Activated CD4-positive, alpha-beta T cell treated with anti-CD3 and anti-CD28 coated beads, Interleukin-2, amount 10 ng/mL, durations not matched to agents 24 days and 14 days (primary cell): ENCODE measurements at regions of chr4 and their contacts with region 1.

Region 1: GRCh38 chr4:100093091-100093866 is 97.0 kb downstream of the DDIT4L start:
- DNase-seq: peak; percentile 94
- H3K4me3 Mint-ChIP-seq: peak overlapping the region; percentile 43
- H3K27ac Mint-ChIP-seq: peak overlapping the region; percentile 91
- H3K4me1 Mint-ChIP-seq: peaks cover 42% of the 10 kb centered on the region
- H3K27me3 Mint-ChIP-seq: no peaks in the 10 kb centered on the region

Region 2: GRCh38 chr4:99949034-99949998 is 144.0 kb before region 1 on chr4:
- intact Hi-C with region 1: loop called (anchors 5 kb)
- DNase-seq: peak; percentile 96
- H3K4me3 Mint-ChIP-seq: no peak overlapping the region
- H3K27ac Mint-ChIP-seq: no peak overlapping the region
- H3K4me1 Mint-ChIP-seq: peaks cover 26% of the 10 kb centered on the region
- H3K27me3 Mint-ChIP-seq: no peaks in the 10 kb centered on the region

Region 3: DNA sequence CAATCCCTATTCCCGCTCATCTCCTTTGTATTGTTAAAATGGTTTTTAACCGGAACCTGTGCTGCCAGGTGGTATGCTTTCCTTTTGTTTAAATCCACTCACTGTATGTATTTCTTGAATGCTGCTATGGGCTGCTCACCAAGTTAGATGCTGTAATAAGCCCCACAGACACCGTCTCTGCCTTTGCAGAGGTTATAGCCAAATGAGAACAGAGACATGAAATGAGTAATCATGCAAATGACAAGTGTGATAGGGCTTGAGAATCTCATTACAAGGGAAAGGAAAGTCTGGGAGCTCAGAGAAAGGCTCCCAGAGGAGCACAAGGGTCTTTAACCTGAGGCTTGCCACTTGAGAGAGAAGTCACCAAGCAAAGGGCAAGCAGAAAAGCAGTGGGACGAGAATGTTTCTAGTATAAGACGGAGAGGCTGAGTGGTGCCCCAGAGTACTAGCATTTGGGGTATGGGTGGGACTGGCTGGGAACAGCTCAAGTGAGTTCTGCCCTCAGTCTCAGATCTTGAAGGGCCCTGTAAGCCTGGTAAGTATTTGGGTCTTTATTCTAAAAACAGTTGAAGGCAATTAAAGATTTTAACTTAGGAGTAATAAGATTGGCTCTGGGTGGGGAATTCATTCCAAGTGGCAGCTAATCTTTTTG is 32.4 kb before region 1 on chr4:
- intact Hi-C with region 1: no loop called
- DNase-seq: no peak
- H3K4me3 Mint-ChIP-seq: no peak overlapping the region
- H3K27ac Mint-ChIP-seq: no peak overlapping the region
- H3K4me1 Mint-ChIP-seq: no peaks in the 10 kb centered on the region
- H3K27me3 Mint-ChIP-seq: peaks cover 2% of the 10 kb centered on the region

Region 4: DNA sequence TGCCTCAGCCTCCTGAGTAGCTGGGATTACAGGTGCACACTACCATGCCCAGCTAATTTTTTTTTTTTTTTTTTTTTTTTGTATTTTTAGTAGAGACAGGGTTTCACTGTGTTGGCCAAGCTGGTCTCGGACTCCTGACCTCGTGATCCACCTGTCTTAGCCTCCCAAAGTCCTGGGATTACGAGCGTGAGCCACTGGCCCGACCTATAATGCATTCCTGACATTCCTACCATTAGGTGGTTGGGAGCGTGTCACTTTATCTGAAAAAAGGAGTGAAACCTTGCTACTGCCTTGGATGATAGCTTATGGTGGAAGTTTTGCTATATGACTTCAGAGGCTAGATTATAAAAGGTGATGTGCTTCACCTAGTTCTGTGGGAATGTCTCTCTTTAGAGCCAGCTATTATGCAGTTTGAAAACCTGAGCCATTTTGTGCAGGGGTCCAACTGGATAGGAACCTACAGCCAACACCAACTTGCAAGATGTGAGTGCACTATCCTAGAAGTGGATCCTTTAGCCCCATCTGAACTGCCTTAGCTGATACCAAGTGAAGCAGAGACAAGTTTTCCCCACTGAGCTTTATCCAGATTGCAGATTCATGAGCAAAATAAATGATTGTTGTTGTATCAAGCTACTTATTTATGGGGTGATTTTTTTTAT is 454.4 kb after region 1 on chr4:
- intact Hi-C with region 1: no loop called
- DNase-seq: no peak
- H3K4me3 Mint-ChIP-seq: no peak overlapping the region
- H3K27ac Mint-ChIP-seq: no peak overlapping the region
- H3K4me1 Mint-ChIP-seq: peaks cover 7% of the 10 kb centered on the region
- H3K27me3 Mint-ChIP-seq: no peaks in the 10 kb centered on the region

Region 5: GRCh38 chr4:100569196-100569595 is 475.9 kb after region 1 on chr4:
- intact Hi-C with region 1: loop called (anchors 5 kb)
- DNase-seq: peak; percentile 61
- H3K4me3 Mint-ChIP-seq: peak overlapping the region; percentile 57
- H3K27ac Mint-ChIP-seq: peak overlapping the region; percentile 47
- H3K4me1 Mint-ChIP-seq: peaks cover 13% of the 10 kb centered on the region
- H3K27me3 Mint-ChIP-seq: no peaks in the 10 kb centered on the region

Region 6: GRCh38 chr4:100581332-100581731 is 488.1 kb after region 1 on chr4:
- intact Hi-C with region 1: no loop called
- DNase-seq: no peak
- H3K4me3 Mint-ChIP-seq: no peak overlapping the region
- H3K27ac Mint-ChIP-seq: no peak overlapping the region
- H3K4me1 Mint-ChIP-seq: no peaks in the 10 kb centered on the region
- H3K27me3 Mint-ChIP-seq: no peaks in the 10 kb centered on the region

Region 7: GRCh38 chr4:101103381-101104142 is 1010.3 kb after region 1 on chr4:
- intact Hi-C with region 1: loop called (anchors 10 kb)
- DNase-seq: peak; percentile 58
- H3K4me3 Mint-ChIP-seq: no peak overlapping the region
- H3K27ac Mint-ChIP-seq: peak overlapping the region; percentile 45
- H3K4me1 Mint-ChIP-seq: peaks cover 21% of the 10 kb centered on the region
- H3K27me3 Mint-ChIP-seq: no peaks in the 10 kb centered on the region

Region 8: GRCh38 chr4:101527188-101527587 is 1433.9 kb after region 1 on chr4:
- intact Hi-C with region 1: loop called (anchors 2 kb)
- DNase-seq: peak; percentile 87
- H3K4me3 Mint-ChIP-seq: peak overlapping the region; percentile 45
- H3K27ac Mint-ChIP-seq: peak overlapping the region; percentile 64
- H3K4me1 Mint-ChIP-seq: peaks cover 15% of the 10 kb centered on the region
- H3K27me3 Mint-ChIP-seq: peaks cover 46% of the 10 kb centered on the region